ENCODE measurements at regions of chr2 and their contacts with region 1.

Region 1: DNA sequence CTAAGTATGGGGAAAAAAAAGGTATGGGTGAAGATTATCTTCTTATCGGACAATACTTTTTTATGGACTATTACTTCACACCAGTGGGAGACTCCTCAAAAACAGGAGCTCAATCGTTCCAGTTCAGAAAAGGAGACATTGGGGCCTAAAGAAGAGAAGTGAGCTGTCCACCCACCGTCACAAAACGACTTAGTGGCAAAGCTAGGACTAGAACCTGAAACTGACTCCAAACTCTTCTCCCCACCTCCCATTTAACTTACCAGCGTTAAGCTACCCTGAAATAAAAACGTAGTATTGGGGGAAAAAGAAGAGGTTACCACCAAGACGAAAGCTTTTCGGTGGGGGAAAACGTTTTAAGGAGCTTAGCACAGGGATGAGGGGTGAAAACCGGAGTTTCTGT is 503 bp downstream of the GTF3C3 start:
- DNase-seq: no peak
- H3K4me3 ChIP-seq: peak overlapping the region; percentile 66 to 75 (median 72)
- H3K27ac ChIP-seq: peak overlapping the region; percentile 69 to 82
- H3K4me1 ChIP-seq: no peaks in the 10 kb centered on the region
- H3K27me3 ChIP-seq: no peaks in the 10 kb centered on the region
- CTCF ChIP-seq: no peak
- POLR2A ChIP-seq: no peak

Region 2: DNA sequence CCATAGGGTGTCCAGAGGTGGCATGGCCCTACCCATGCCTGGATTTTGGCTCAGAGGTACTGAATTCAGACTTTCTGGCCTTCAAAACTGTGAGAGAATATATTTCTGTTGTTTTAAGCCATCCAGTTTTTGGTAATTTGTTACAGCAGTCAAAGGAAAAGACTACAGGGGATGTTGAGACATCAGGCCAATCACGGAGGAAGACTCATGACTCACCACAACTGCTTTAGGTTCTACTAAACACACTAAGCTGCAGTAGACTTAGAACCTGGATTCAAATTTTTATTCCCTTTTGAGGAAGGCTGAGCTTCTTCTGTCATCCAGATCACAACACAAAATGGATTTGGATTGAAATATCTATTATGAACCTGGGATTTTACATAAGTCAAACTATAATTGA is 22.2 kb after region 1 on chr2:
- intact Hi-C with region 1: loop called (anchors 1 kb)
- DNase-seq: no peak
- H3K4me3 ChIP-seq: no peak overlapping the region
- H3K27ac ChIP-seq: no peak overlapping the region
- H3K4me1 ChIP-seq: no peaks in the 10 kb centered on the region
- H3K27me3 ChIP-seq: no peaks in the 10 kb centered on the region
- CTCF ChIP-seq: no peak
- POLR2A ChIP-seq: no peak

Measured in breast epithelium (tissue), 4 donors.